ENCODE measurements at regions of chr5 and their contacts with region 1.

Region 1: DNA sequence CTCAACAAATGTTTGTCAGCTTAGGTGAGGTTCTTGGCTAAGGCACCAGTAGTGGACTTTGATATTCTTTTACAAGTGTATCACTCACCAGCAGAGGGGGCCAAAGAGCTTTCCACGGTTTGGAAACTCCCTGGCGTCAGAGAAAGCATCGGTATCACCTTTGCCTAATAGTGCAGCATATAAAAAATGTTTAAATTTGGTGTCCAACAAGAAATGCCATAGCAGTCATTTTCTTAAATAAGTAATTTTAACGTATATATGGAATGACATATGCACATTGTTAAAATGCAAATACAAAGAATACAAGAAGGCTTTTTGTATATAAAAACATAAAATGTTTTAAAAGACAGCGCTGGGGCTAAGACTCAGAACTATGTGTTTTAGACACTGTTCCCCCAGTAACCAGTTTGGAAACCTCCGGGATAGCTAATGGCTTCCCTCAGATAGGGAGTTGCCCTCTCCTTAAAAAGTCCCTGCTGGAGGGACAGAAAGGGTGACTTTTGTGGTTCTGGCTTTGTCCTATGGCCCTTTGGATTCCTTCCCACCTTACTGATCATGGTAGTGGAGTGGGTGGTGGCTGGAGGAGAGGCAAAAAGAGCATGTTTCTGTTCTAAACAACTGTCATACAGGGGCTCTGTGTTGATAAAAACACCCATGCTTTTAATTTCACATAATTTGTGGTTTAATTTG is 124.6 kb downstream of the GPBP1 start:
- DNase-seq: peak in 2 of 3 donors; percentile 71 to 98
- ATAC-seq: peak; percentile 93
- H3K4me3 ChIP-seq: no peak overlapping the region
- H3K4me1 ChIP-seq: peaks cover 7% of the 10 kb centered on the region
- CTCF ChIP-seq: peak; percentile 60

Region 2: DNA sequence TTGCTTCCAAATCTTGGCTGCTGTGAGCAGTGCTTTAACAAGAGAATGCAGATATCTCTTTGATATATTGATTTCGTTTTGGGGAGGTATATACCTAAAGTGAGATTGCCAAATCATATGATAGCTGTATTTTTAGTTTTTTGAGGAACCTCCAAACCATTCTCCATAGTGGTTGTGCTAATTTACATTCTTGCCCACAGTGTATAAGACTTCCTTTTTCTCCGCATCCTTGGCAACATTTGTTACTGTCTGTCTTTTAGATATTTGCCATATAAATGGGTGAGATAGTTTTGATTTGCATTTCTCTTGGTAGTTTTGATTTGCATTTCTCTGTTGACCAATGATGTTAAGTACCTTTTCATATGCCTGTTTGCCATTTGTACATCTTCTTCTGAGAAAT is 1171.5 kb after region 1 on chr5:
- intact Hi-C with region 1: loop called in 1 of 2 experiments (anchors 5 kb)
- DNase-seq: no peak
- ATAC-seq: no peak
- H3K4me3 ChIP-seq: no peak overlapping the region
- H3K4me1 ChIP-seq: no peaks in the 10 kb centered on the region
- CTCF ChIP-seq: no peak

Measured in mucosa of descending colon (tissue), 3 donors.